CD4-positive, alpha-beta T cell (primary cell): ENCODE measurements at regions of chr2 and their contacts with region 1.

Region 1: GRCh38 chr2:119929537-119929936 is 83.3 kb upstream of the EPB41L5 start:
- DNase-seq: peak in 6 of 14 experiments; percentile 4 to 90 (median 40)
- ATAC-seq: peak; percentile 90
- H3K4me3 ChIP-seq: peak overlapping the region; percentile 56
- H3K4me3 Mint-ChIP-seq: peak overlapping the region; percentile 78
- H3K27ac ChIP-seq: peak overlapping the region; percentile 50 to 61
- H3K27ac Mint-ChIP-seq: peak overlapping the region; percentile 94
- H3K4me1 ChIP-seq: peaks cover 24% of the 10 kb centered on the region
- H3K4me1 Mint-ChIP-seq: peaks cover 78% of the 10 kb centered on the region
- H3K27me3 ChIP-seq: no peaks in the 10 kb centered on the region
- H3K27me3 Mint-ChIP-seq: no peaks in the 10 kb centered on the region
- CTCF ChIP-seq: no peak

Region 2: GRCh38 chr2:119659601-119660342 is 269.8 kb before region 1 on chr2:
- CTCF ChIA-PET with region 1: no interaction called
- POLR2A ChIA-PET with region 1: no interaction called
- intact Hi-C with region 1: no loop called
- DNase-seq: peak in 9 of 14 experiments; percentile 12 to 65 (median 26)
- ATAC-seq: peak; percentile 39
- H3K4me3 ChIP-seq: no peak overlapping the region
- H3K4me3 Mint-ChIP-seq: no peak overlapping the region
- H3K27ac ChIP-seq: no peak overlapping the region
- H3K27ac Mint-ChIP-seq: no peak overlapping the region
- H3K4me1 ChIP-seq: no peaks in the 10 kb centered on the region
- H3K4me1 Mint-ChIP-seq: no peaks in the 10 kb centered on the region
- H3K27me3 ChIP-seq: no peaks in the 10 kb centered on the region
- H3K27me3 Mint-ChIP-seq: peaks cover 12% of the 10 kb centered on the region
- CTCF ChIP-seq: peak; percentile 82

Region 3: GRCh38 chr2:119753041-119753929 is 176.3 kb before region 1 on chr2:
- CTCF ChIA-PET with region 1: no interaction called
- POLR2A ChIA-PET with region 1: no interaction called
- intact Hi-C with region 1: loop called (anchors 2 to 5 kb)
- DNase-seq: peak in 8 of 14 experiments; percentile 9 to 75 (median 40)
- ATAC-seq: peak; percentile 86
- H3K4me3 ChIP-seq: no peak overlapping the region
- H3K4me3 Mint-ChIP-seq: no peak overlapping the region
- H3K27ac ChIP-seq: no peak overlapping the region
- H3K27ac Mint-ChIP-seq: no peak overlapping the region
- H3K4me1 ChIP-seq: no peaks in the 10 kb centered on the region
- H3K4me1 Mint-ChIP-seq: peaks cover 4% of the 10 kb centered on the region
- H3K27me3 ChIP-seq: no peaks in the 10 kb centered on the region
- H3K27me3 Mint-ChIP-seq: no peaks in the 10 kb centered on the region
- CTCF ChIP-seq: peak; percentile 91

Region 4: GRCh38 chr2:119856469-119856912 is 73.0 kb before region 1 on chr2:
- CTCF ChIA-PET with region 1: no interaction called
- POLR2A ChIA-PET with region 1: no interaction called
- intact Hi-C with region 1: no loop called
- DNase-seq: no peak
- ATAC-seq: no peak
- H3K4me3 ChIP-seq: no peak overlapping the region
- H3K4me3 Mint-ChIP-seq: no peak overlapping the region
- H3K27ac ChIP-seq: no peak overlapping the region
- H3K27ac Mint-ChIP-seq: no peak overlapping the region
- H3K4me1 ChIP-seq: peaks cover 4% of the 10 kb centered on the region
- H3K4me1 Mint-ChIP-seq: peaks cover 59% of the 10 kb centered on the region
- H3K27me3 ChIP-seq: no peaks in the 10 kb centered on the region
- H3K27me3 Mint-ChIP-seq: no peaks in the 10 kb centered on the region
- CTCF ChIP-seq: no peak